CD8-positive, alpha-beta T cell (primary cell): ENCODE measurements at regions of chr19 and their contacts with region 1.

Region 1: GRCh38 chr19:16262618-16263017 is 62.0 kb upstream of the KLF2 start:
- DNase-seq: no peak
- ATAC-seq: no peak
- H3K4me3 ChIP-seq: no peak overlapping the region
- H3K4me3 Mint-ChIP-seq: peak overlapping the region; percentile 54
- H3K27ac ChIP-seq: no peak overlapping the region
- H3K27ac Mint-ChIP-seq: no peak overlapping the region
- H3K4me1 ChIP-seq: peaks cover 68% of the 10 kb centered on the region
- H3K4me1 Mint-ChIP-seq: peaks cover 63% of the 10 kb centered on the region
- H3K27me3 ChIP-seq: no peaks in the 10 kb centered on the region
- H3K27me3 Mint-ChIP-seq: no peaks in the 10 kb centered on the region
- CTCF ChIP-seq: no peak

Region 2: DNA sequence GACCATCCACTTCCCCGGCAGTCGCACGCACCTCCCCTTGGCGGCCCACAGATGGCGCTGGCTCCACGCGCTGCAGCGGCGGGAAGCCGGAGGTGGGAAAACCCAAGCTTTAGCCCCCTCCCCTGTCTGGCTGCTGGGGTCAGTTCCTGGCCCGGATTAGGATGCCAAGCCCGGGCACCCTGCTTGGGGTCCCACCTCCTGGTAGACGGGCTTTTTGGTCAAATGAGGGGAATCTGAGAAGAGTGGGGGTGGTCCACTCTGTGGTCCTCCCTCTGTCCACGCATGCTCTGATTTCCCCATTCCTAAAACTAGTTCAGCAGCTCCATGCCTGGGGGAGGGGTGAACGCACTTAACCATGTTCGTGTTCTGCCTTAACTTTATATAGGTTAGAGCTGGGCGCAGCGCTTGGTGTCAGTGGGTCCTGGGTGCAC is 1476.2 kb before region 1 on chr19:
- CTCF ChIA-PET with region 1: no interaction called
- POLR2A ChIA-PET with region 1: no interaction called
- intact Hi-C with region 1: no loop called
- DNase-seq: peak in 4 of 9 experiments; percentile 11 to 42 (median 19)
- ATAC-seq: no peak
- H3K4me3 ChIP-seq: no peak overlapping the region
- H3K4me3 Mint-ChIP-seq: no peak overlapping the region
- H3K27ac ChIP-seq: no peak overlapping the region
- H3K27ac Mint-ChIP-seq: no peak overlapping the region
- H3K4me1 ChIP-seq: peaks cover 9% of the 10 kb centered on the region
- H3K4me1 Mint-ChIP-seq: peaks cover 15% of the 10 kb centered on the region
- H3K27me3 ChIP-seq: no peaks in the 10 kb centered on the region
- H3K27me3 Mint-ChIP-seq: peaks cover 25% of the 10 kb centered on the region
- CTCF ChIP-seq: peak; percentile 44

Region 3: DNA sequence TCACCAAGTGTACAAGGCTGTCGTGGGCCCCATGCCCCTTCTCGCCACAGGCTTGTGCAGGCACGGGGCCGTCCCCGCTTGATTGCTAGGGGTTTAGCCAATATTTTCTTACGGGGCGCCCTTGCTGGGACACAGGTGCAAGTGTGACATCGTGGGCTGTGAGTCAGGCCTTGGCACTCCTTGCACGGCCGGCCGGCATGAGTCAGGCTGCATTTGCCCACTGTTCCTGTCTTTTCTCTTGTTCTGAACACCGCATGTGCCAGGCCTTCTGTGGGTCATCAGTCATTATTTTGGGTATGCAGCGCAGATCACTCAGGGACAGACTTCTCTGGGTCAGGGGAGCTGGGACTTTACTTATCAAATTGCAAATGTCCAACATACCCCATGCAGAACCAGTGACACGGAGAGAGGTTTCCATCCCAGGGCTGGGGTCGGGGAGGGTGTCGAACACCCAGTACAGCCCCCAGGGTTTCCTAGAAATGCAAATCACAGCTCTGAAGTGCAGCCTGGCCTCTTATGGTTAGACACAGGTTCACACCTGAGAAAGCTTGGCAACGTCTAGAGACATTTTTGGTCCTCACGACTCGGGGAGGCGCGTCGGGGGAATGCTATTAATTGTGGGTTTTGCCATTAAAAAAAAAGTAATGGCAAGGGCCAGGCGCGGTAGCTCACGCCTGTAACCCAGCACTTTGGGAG is 39.5 kb after region 1 on chr19:
- CTCF ChIA-PET with region 1: no interaction called
- POLR2A ChIA-PET with region 1: no interaction called
- intact Hi-C with region 1: loop called in 1 of 2 experiments (anchors 5 kb)
- DNase-seq: no peak
- ATAC-seq: no peak
- H3K4me3 ChIP-seq: no peak overlapping the region
- H3K4me3 Mint-ChIP-seq: no peak overlapping the region
- H3K27ac ChIP-seq: no peak overlapping the region
- H3K27ac Mint-ChIP-seq: no peak overlapping the region
- H3K4me1 ChIP-seq: no peaks in the 10 kb centered on the region
- H3K4me1 Mint-ChIP-seq: no peaks in the 10 kb centered on the region
- H3K27me3 ChIP-seq: peaks cover 0 to 2% of the 10 kb centered on the region in 2 experiments
- H3K27me3 Mint-ChIP-seq: no peaks in the 10 kb centered on the region
- CTCF ChIP-seq: no peak

Region 4: DNA sequence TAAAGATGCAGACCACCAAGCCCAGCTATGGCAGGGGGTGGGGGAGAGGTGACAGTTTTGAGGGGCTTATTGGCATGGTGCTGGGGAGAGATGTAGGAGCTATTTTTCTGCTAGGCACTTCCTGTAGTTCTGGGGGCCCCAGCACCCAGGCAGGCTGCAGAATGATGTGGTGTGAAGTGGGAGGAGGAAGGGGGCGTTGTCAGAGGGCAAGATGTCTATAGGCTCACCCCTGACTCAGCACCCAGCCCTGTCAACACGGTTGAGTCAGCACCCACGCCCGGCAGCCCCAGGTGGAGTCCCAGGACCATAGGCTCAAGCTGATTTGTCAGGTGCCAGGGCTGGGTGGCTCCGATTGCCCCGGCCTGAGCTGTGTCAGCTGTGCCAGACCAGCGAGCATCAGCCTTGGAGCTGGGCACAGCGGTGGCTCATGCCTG is 67.8 kb after region 1 on chr19:
- CTCF ChIA-PET with region 1: interaction called, 3 read pairs
- POLR2A ChIA-PET with region 1: interaction called, 37 read pairs
- intact Hi-C with region 1: no loop called
- DNase-seq: peak; percentile 88 to 99 (median 95)
- ATAC-seq: peak; percentile 74
- H3K4me3 ChIP-seq: no peak overlapping the region
- H3K4me3 Mint-ChIP-seq: peak overlapping the region; percentile 59
- H3K27ac ChIP-seq: peak overlapping the region; percentile 93 to 99
- H3K27ac Mint-ChIP-seq: peak overlapping the region; percentile 96
- H3K4me1 ChIP-seq: peaks cover 36% of the 10 kb centered on the region
- H3K4me1 Mint-ChIP-seq: peaks cover 46% of the 10 kb centered on the region
- H3K27me3 ChIP-seq: no peaks in the 10 kb centered on the region
- H3K27me3 Mint-ChIP-seq: no peaks in the 10 kb centered on the region
- CTCF ChIP-seq: no peak

Region 5: DNA sequence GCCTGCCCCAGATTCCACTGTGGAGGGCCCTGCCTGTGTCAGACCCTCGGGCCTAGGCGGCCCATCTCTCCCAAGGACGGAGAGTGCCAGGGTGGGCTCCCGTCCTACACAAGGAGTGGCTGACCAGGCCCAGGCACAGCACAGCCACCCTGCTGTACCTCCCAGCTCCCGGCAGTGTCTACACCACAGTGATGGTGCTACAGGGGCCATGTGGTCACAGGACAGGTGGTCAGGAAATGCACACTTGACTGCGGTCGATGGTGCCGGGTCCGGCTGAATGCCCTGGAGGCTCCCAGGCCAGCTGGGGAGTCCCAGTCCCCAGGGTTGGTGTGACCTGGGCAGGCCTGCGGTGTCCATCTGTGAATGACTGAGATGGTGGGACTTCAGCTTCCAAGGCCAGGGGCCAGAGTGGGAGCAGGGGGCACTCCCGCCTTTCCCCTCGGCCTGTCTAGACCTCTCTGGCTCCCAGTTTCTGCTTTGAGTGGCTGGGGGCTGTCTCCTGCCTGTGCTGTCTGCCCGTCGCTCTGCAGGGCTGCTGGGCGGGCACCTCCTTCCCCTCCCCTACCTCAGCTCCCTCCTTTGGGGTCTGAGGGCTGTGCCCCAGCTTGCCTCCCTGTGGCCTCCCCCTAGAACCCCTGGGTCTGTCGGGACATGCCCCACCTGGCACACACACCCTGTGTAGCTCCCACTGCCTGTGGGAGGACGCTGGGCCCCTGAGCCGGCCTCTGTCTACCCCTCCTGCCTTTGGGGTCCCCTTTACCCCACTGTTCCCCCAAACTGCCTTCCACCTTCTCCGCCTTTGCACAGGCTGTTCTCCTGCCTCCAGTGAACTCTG is 1059.3 kb after region 1 on chr19:
- CTCF ChIA-PET with region 1: no interaction called
- POLR2A ChIA-PET with region 1: no interaction called
- intact Hi-C with region 1: no loop called
- DNase-seq: peak in 1 of 9 experiments; percentile 5
- ATAC-seq: no peak
- H3K4me3 ChIP-seq: no peak overlapping the region
- H3K4me3 Mint-ChIP-seq: no peak overlapping the region
- H3K27ac ChIP-seq: no peak overlapping the region
- H3K27ac Mint-ChIP-seq: no peak overlapping the region
- H3K4me1 ChIP-seq: no peaks in the 10 kb centered on the region
- H3K4me1 Mint-ChIP-seq: peaks cover 2% of the 10 kb centered on the region
- H3K27me3 ChIP-seq: no peaks in the 10 kb centered on the region
- H3K27me3 Mint-ChIP-seq: no peaks in the 10 kb centered on the region
- CTCF ChIP-seq: no peak